Heart left ventricle (tissue), 16 donors: ENCODE measurements at regions of chr6 and their contacts with region 1.

Region 1: GRCh38 chr6:108558372-108559096 is 2.2 kb upstream of the FOXO3 start:
- DNase-seq: peak; percentile 98 to 100 (median 99)
- ATAC-seq: peak; percentile 72 to 79 (median 73)
- H3K4me3 ChIP-seq: peak overlapping the region; percentile 81 to 99 (median 96)
- H3K27ac ChIP-seq: peak overlapping the region; percentile 94 to 100 (median 99)
- H3K4me1 ChIP-seq: peaks cover 0 to 40% (median 24%) of the 10 kb centered on the region in 12 donors
- H3K27me3 ChIP-seq: no peaks in the 10 kb centered on the region
- CTCF ChIP-seq: no peak
- POLR2A ChIP-seq: peak in 1 of 2 donors; percentile 65

Region 2: GRCh38 chr6:108655806-108656651 is 97.5 kb after region 1 on chr6:
- intact Hi-C with region 1: loop called in 7 of 10 experiments (anchors 1 to 10 kb)
- DNase-seq: peak in 2 of 5 donors; percentile 53 to 54
- ATAC-seq: peak; percentile 17 to 62 (median 47)
- H3K4me3 ChIP-seq: peak overlapping the region in 6 of 12 donors; percentile 11 to 29 (median 16)
- H3K27ac ChIP-seq: peak overlapping the region; percentile 53 to 91 (median 84)
- H3K4me1 ChIP-seq: peaks cover 27 to 92% (median 80%) of the 10 kb centered on the region in 12 donors
- H3K27me3 ChIP-seq: no peaks in the 10 kb centered on the region
- CTCF ChIP-seq: no peak
- POLR2A ChIP-seq: no peak

Region 3: GRCh38 chr6:108737594-108738546 is 179.3 kb after region 1 on chr6:
- intact Hi-C with region 1: no loop called
- DNase-seq: peak in 2 of 5 donors; percentile 54 to 77
- ATAC-seq: peak in 3 of 4 donors; percentile 50 to 88 (median 60)
- H3K4me3 ChIP-seq: peak overlapping the region in 1 of 12 donors; percentile 13
- H3K27ac ChIP-seq: peak overlapping the region in 3 of 12 donors; percentile 4 to 67 (median 31)
- H3K4me1 ChIP-seq: peaks cover 0 to 30% (median 5%) of the 10 kb centered on the region in 12 donors
- H3K27me3 ChIP-seq: no peaks in the 10 kb centered on the region
- CTCF ChIP-seq: no peak
- POLR2A ChIP-seq: no peak

Region 4: DNA sequence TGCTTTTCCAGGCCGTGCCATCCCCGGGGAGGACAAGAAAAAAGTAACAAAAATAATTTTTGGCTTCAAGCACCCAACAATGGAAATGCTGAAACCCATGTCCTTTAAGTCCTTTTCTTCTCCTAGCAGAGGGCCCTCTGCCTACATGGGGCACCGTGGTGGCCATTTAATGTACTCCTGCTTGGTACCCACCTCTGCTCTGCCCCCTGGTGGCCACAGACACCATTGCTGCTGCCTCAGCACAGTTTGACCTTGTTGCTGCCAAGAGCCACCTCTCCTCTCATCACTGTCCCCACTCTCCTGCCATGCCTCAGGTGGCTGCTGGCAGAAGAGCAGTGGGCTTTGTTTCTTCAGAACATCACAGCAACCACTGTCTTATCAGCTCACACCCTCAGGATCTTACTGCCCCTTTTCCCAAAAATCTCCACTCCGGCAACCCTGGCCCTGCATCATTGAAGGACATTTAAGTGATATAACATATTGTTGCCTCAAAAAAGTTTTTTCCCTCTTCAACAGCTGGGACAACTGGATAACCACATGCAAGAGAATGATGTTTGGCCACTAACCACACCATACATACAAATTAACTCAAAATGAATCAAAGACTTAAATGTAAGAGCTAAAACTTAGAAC is 276.8 kb after region 1 on chr6:
- intact Hi-C with region 1: loop called in 4 of 10 experiments (anchors 5 kb)
- DNase-seq: peak; percentile 85 to 91 (median 88)
- ATAC-seq: peak; percentile 78 to 96 (median 94)
- H3K4me3 ChIP-seq: no peak overlapping the region
- H3K27ac ChIP-seq: peak overlapping the region in 4 of 12 donors; percentile 3 to 34 (median 14)
- H3K4me1 ChIP-seq: peaks cover 0 to 39% (median 1%) of the 10 kb centered on the region in 12 donors
- H3K27me3 ChIP-seq: no peaks in the 10 kb centered on the region
- CTCF ChIP-seq: peak in 11 of 12 donors; percentile 85 to 98 (median 95)
- POLR2A ChIP-seq: no peak

Region 5: DNA sequence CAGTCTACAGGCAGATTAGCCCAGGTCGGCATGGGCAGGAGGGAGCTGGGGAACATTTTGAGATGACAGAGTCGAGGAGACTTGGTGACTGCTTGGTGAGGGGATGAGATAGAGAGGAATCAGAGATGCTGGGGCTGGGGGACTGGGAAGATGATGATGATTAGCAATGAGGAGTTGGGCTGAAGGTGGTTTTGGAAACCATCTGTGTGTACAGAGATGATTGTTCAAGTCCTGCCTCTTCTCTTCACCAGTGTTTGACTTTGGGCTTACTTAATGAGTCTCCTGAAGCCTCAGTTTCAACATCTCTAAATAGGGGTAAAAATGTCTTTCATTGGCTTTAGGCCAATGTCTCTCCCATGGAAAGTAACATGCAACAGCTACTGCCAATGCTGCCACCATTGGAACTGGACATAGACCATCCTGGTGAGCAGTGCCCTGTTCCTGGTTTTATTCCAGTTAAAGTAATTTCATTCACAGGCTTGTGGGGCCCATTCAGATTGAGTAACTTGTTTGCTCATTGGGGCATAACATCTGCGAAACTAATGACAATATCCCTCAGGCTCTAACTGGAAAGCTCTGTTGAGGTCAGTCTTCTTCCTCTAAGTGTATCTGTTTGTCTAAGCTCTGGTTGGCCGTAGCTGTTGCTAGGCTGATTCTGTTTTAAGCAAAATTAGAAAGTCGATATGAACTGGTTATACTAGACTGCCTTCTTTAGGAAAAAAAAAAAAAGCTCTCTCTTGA is 388.8 kb after region 1 on chr6:
- intact Hi-C with region 1: loop called in 3 of 10 experiments (anchors 5 kb)
- DNase-seq: peak in 1 of 5 donors; percentile 43
- ATAC-seq: peak in 3 of 4 donors; percentile 35 to 55 (median 48)
- H3K4me3 ChIP-seq: no peak overlapping the region
- H3K27ac ChIP-seq: peak overlapping the region; percentile 83 to 97 (median 94)
- H3K4me1 ChIP-seq: peaks cover 12 to 73% (median 65%) of the 10 kb centered on the region in 12 donors
- H3K27me3 ChIP-seq: no peaks in the 10 kb centered on the region
- CTCF ChIP-seq: peak in 1 of 12 donors; percentile 9
- POLR2A ChIP-seq: peak in 1 of 2 donors; percentile 37

Region 6: GRCh38 chr6:109082188-109082577 is 523.6 kb after region 1 on chr6:
- intact Hi-C with region 1: loop called in 2 of 10 experiments (anchors 5 kb)
- DNase-seq: no peak
- ATAC-seq: peak in 3 of 4 donors; percentile 5 to 60 (median 44)
- H3K4me3 ChIP-seq: no peak overlapping the region
- H3K27ac ChIP-seq: peak overlapping the region in 11 of 12 donors; percentile 50 to 88 (median 81)
- H3K4me1 ChIP-seq: peaks cover 0 to 79% (median 40%) of the 10 kb centered on the region in 12 donors
- H3K27me3 ChIP-seq: no peaks in the 10 kb centered on the region
- CTCF ChIP-seq: peak in 1 of 12 donors; percentile 18
- POLR2A ChIP-seq: no peak